ENCODE measurements at regions of chr7 and their contacts with region 1.

Region 1: GRCh38 chr7:126803060-126803665 is 449.6 kb downstream of the GRM8 start:
- DNase-seq: peak; percentile 51
- H3K4me3 Mint-ChIP-seq: no peak overlapping the region
- H3K27ac Mint-ChIP-seq: no peak overlapping the region
- H3K4me1 Mint-ChIP-seq: no peaks in the 10 kb centered on the region
- H3K27me3 Mint-ChIP-seq: peaks cover 3% of the 10 kb centered on the region

Region 2: GRCh38 chr7:127066974-127067373 is 263.8 kb after region 1 on chr7:
- CTCF ChIA-PET with region 1: no interaction called
- intact Hi-C with region 1: loop called (anchors 10 kb)
- DNase-seq: no peak
- H3K4me3 Mint-ChIP-seq: no peak overlapping the region
- H3K27ac Mint-ChIP-seq: no peak overlapping the region
- H3K4me1 Mint-ChIP-seq: no peaks in the 10 kb centered on the region
- H3K27me3 Mint-ChIP-seq: peaks cover 3% of the 10 kb centered on the region

Region 3: GRCh38 chr7:127177156-127177555 is 374.0 kb after region 1 on chr7:
- CTCF ChIA-PET with region 1: no interaction called
- intact Hi-C with region 1: no loop called
- DNase-seq: no peak
- H3K4me3 Mint-ChIP-seq: no peak overlapping the region
- H3K27ac Mint-ChIP-seq: no peak overlapping the region
- H3K4me1 Mint-ChIP-seq: no peaks in the 10 kb centered on the region
- H3K27me3 Mint-ChIP-seq: peaks cover 47% of the 10 kb centered on the region

Region 4: DNA sequence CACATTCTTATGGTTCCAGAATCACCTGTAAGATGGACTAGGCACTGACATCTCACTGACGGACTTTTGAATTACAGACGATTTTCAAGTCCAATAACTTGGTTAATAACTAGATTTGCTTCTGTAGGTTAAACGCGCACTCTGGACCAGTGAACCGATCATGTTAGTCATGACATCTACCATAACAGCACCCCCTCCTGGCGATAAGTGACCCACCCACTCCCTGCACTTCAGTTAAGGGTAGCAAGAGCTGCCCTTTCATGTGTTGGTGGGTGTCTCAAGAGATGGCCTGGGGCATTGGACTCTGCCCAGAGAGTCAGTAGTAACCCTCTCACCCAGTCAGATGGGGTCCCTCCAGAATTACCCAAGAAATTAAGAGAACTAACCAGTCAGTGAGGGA is 436.7 kb after region 1 on chr7:
- CTCF ChIA-PET with region 1: no interaction called
- intact Hi-C with region 1: loop called (anchors 1 kb)
- DNase-seq: peak; percentile 31
- H3K4me3 Mint-ChIP-seq: no peak overlapping the region
- H3K27ac Mint-ChIP-seq: no peak overlapping the region
- H3K4me1 Mint-ChIP-seq: no peaks in the 10 kb centered on the region
- H3K27me3 Mint-ChIP-seq: peaks cover 44% of the 10 kb centered on the region

Region 5: DNA sequence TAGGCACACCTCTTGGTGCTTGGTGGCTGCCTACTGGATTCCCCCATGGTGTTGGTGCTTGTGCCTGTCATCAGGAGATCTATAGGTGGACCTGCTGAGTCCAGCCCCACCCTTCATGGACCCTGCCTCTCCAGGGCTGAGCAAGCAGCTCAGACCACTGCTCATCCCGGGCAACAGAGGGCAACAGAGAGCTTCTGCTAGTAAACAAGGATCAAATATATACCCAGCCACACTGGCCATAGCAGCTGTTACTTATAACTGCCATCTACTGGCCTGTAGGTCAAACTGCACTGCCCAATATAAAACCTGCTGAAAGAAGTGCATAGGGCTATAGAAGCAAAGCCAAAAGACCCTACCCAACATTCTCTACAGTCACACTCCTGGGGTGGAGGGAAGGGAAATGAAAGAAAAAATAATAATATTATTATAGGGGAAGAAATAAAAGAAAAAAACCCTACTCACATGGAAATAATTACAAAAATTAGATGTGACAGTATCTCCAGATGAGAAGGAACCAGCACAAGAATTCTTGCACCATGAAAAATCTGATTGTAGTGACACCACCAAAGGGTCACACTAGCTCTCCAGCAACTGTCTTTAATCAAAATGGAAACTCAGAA is 644.3 kb after region 1 on chr7:
- CTCF ChIA-PET with region 1: no interaction called
- intact Hi-C with region 1: loop called (anchors 5 kb)
- DNase-seq: peak; percentile 52
- H3K4me3 Mint-ChIP-seq: no peak overlapping the region
- H3K27ac Mint-ChIP-seq: no peak overlapping the region
- H3K4me1 Mint-ChIP-seq: peaks cover 15% of the 10 kb centered on the region
- H3K27me3 Mint-ChIP-seq: no peaks in the 10 kb centered on the region

Region 6: DNA sequence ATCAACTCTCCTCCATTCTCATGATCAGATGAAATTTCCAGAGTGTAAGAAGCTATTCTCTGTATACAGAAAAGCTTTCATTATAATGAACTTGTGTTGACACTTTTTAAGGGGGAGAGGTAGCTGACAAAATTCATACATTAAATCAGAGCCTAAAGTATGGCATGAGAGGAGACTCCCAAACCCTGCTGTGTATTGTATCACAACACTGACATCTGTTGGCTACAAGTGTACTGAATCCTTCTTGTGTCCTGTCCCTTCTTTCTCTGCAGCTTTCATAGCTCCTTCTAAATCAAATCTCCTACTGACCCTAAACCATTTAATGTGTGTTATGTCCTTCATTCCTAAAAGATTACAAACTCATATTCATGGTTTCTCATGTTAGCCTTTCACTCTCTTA is 711.3 kb after region 1 on chr7:
- CTCF ChIA-PET with region 1: no interaction called
- intact Hi-C with region 1: loop called (anchors 1 kb)
- DNase-seq: no peak
- H3K4me3 Mint-ChIP-seq: no peak overlapping the region
- H3K27ac Mint-ChIP-seq: no peak overlapping the region
- H3K4me1 Mint-ChIP-seq: no peaks in the 10 kb centered on the region
- H3K27me3 Mint-ChIP-seq: peaks cover 5% of the 10 kb centered on the region

Measured in activated naive CD4-positive, alpha-beta T cell treated with anti-CD3 and anti-CD28 coated beads for 36 hours (primary cell).